ENCODE measurements at regions of chr2 and their contacts with region 1.

Region 1: DNA sequence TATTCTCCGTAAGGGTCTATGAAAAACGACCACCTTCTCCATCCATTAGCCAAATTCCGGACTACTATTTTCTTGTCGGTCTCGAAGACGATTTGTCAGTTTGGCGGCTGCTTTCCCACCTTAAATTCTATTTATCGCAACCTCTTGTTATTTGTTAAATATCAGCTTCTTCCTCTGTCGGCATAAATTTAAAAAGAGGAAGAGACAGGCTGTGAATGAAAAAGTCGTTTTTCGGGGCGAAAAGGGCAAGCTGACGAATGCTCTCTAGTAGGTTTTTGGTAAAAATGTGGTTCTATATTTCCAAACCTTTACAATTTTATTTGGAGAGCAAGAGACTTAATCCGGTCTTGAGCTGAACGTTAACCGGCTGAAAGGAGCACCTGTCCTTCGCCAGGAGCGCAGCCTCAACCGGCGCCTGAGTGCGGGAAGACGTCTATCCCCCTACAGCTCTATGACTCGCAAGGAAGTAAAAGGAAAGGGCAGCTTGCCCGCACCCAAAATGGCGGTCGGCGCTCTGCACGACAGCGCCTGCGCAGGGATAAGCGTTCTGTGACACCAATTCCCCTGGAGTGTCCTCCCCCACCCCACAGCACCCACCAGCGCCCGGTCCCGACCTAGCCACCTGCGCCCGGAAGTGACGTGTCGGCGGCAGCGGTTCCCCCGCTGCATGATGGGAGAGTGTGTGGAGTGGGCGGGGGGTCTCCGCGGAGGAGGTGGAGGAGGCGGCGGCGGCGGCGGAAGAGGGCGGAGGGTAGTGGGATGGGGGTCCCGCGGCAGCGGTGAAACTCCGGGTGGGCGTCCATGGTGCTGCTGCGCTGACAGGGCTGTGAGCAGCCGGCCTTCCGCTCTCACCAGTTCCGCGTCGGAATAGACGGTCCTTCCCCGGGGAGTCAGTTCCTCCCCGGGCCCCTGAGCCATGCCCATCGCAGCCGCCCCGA is at the start of gene AFTPH:
- DNase-seq: peak; percentile 99
- ATAC-seq: peak; percentile 99
- total RNA-seq, gene AFTPH: 14.0 TPM

Region 2: GRCh38 chr2:64562148-64562784 is 38.3 kb after region 1 on chr2:
- intact Hi-C with region 1: loop called (anchors 2 kb)
- DNase-seq: no peak
- ATAC-seq: no peak

Region 3: DNA sequence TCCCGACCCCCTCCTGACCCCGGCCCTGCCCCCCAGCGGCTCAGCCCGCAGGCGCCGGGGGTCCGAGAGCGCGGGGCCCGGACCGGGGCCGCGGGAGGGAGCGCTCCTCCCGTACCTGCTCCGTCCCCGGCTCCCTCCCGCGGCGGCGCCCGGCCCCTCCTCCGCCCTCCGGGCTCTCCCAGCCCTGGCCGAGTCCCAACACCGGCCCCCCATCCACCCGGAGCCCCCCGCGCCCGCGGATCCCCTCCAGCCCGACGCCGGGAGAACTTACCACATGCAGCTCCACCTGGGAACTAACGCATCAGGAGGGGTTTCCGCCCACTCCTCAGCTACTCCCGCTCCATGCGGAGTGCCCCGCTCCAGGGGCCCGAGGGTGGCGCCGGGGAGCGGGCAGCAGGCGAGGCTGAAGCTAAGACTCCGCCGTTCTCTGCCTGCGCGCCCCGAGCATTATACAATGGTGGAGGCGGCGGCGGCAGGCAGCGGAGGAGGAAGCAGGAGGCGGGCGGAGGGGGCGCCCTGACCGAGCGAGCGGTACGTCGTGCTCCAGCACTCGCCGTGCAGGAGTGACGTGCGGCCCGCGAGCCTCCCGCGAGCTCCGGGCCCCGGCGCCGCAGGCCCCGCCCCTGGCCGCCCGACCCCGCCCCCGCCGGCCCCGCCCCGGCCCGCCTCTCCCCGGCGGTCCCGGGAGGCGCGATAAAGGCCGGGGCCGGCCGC is 129.6 kb after region 1 on chr2 and contains the start of gene SERTAD2:
- intact Hi-C with region 1: loop called (anchors 5 kb)
- DNase-seq: peak; percentile 96
- ATAC-seq: peak; percentile 93
- total RNA-seq, gene SERTAD2: 13.6 TPM

Region 4: DNA sequence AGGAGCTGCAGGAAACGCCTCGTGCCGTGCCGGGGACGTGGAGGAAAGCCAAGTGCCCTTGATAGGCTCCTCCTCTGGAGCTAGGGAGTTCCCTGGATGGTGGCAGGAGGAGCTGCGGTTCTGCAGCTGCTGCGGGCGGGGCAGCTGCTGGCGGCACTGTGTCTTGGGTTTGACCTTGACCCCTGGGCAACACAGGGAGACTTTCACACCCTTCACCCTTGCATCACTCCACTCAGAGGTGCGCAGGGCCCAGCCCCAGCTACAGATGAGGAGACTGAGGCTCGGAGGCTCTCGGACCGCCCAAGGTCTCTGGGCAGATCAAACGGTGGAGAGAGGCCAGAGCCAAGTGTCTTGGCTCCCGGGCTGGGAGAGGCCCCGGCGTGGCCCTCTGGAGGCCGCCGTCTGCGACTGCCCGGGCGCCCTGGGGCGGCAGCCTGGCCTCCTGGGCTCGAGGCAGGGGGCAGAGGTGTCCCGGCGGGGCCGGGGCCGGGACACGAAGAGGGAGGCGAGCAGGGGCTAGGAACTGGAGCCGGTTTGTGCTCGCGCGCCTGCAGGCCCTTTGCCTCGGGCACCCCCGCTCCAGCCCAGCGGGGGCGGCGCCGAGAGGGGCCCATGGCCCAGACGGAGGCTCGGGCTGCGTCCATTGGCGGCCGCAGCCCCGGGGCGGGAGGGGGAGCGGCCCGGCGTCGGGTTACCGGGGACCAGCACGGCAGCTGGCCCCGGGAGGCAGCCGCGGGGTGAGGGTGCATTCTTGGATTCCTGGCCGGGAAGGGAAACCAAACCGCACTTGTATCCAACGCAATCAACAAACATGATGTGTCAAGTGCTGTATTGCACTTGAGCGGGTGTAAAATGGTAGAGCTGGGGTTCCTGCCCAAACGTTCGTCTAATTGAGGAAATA is 335.6 kb after region 1 on chr2:
- intact Hi-C with region 1: loop called (anchors 5 kb)
- DNase-seq: peak; percentile 92
- ATAC-seq: peak; percentile 89

Measured in Right ventricle myocardium inferior (tissue), 1 donor.